Adrenal gland (tissue), 19 donors: ENCODE measurements at regions of chr9 and their contacts with region 1.

Region 1: DNA sequence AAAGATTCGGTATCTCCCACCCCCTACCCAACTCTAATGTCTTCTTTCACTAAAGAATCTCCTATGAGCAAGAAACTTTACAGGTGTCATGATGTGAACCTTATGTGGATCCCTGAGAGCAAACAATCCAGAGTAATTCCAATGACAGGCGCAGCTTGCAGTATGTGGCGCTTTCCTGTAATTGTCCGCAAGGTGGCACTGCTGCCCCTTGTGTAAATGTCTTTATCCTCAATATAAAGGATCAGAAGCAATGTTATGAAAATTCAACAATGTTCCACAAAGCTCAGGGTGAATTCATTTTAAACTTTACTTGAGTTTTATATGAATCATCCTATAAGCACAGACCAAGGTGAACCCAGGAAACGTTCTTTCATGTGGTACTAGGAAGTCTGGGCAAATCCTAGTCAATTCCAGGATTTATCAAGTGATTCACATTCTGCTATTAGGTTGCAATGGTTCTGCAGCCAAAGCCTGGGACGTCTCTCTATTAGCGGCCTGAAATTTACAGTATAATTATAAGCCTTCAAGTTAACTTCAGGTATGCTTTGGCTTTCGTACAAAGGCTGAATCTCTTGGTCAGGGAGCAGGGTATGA is 113.7 kb downstream of the TRPM6 start:
- DNase-seq: peak; percentile 59 to 94 (median 87)
- H3K4me3 ChIP-seq: no peak overlapping the region
- H3K27ac ChIP-seq: no peak overlapping the region
- H3K4me1 ChIP-seq: no peaks in the 10 kb centered on the region
- H3K27me3 ChIP-seq: peaks cover 5% of the 10 kb centered on the region
- CTCF ChIP-seq: peak; percentile 78 to 91 (median 83)
- POLR2A ChIP-seq: no peak

Region 2: GRCh38 chr9:74985041-74985440 is 211.1 kb after region 1 on chr9:
- intact Hi-C with region 1: loop called in 1 of 2 experiments (anchors 5 kb)
- DNase-seq: peak in 1 of 7 donors; percentile 13
- H3K4me3 ChIP-seq: no peak overlapping the region
- H3K27ac ChIP-seq: no peak overlapping the region
- H3K4me1 ChIP-seq: no peaks in the 10 kb centered on the region
- H3K27me3 ChIP-seq: no peaks in the 10 kb centered on the region
- CTCF ChIP-seq: no peak
- POLR2A ChIP-seq: no peak

Region 3: DNA sequence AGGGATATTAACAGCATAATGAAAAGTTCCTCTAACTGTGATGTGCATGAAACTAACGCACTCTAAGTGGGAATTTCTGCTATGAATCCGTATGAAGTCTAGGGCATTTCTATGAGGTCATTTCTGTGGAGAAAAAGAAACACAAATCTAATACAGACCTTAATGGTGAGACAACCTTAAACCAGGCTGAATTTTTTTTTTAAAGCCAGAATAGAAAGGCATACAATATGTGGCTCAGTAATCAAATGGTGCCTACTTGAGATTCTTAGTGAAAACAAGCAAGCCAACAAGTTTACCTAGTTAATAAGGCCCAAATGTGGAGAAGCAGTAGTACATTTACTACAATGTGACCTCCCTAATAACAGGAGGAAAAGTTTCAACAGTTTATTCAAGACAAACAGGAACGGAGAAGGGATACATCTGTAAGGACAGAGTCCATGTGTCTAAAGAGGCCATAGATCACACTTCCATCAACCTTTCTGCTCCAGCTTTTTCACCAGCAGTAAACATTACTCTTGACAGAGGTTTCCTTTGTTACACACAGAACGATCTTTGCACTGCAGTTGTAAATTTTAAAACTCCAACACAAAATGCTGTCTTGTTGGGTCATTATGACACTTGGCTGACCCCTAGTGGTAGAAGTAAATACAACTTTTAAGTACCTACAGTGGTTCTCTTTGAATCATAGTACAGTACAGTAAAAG is 227.9 kb after region 1 on chr9:
- intact Hi-C with region 1: loop called (anchors 2 to 5 kb)
- DNase-seq: peak in 2 of 7 donors; percentile 7 to 11
- H3K4me3 ChIP-seq: no peak overlapping the region
- H3K27ac ChIP-seq: no peak overlapping the region
- H3K4me1 ChIP-seq: no peaks in the 10 kb centered on the region
- H3K27me3 ChIP-seq: no peaks in the 10 kb centered on the region
- CTCF ChIP-seq: peak; percentile 75 to 85 (median 82)
- POLR2A ChIP-seq: peak in 1 of 2 donors; percentile 11

Region 4: DNA sequence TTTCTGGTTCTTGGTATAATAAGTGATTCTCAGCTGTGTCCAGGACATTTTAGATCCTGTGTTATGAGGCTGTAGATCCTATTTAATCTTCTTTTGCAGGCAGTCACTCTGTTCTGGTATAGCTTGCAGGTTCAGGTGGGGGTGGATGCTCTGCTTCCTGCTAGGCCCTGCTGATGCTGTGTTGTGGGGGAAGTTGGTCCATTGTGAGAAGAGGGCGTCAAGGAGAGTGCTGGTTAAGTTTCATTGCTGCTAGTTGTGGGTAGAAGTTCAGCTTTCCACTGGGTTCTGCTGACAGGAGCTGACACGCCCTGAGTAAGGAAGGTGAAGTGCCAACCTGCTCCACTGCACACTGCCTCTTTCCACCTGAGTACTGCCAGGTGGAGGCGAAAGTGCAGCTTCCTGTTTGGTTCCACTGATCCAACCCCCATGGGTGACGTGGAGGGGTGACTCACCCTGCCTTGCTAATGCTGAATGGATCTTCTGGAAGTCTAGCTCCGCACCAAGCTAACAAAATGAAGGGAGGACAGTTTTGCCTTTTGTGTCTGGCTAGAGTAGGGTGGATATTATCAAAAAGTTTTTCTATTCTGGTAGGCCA is 297.6 kb after region 1 on chr9:
- intact Hi-C with region 1: loop called in 1 of 2 experiments (anchors 5 kb)
- DNase-seq: no peak
- H3K4me3 ChIP-seq: no peak overlapping the region
- H3K27ac ChIP-seq: no peak overlapping the region
- H3K4me1 ChIP-seq: peaks cover 0 to 5% of the 10 kb centered on the region in 2 donors
- H3K27me3 ChIP-seq: no peaks in the 10 kb centered on the region
- CTCF ChIP-seq: no peak
- POLR2A ChIP-seq: no peak

Region 5: DNA sequence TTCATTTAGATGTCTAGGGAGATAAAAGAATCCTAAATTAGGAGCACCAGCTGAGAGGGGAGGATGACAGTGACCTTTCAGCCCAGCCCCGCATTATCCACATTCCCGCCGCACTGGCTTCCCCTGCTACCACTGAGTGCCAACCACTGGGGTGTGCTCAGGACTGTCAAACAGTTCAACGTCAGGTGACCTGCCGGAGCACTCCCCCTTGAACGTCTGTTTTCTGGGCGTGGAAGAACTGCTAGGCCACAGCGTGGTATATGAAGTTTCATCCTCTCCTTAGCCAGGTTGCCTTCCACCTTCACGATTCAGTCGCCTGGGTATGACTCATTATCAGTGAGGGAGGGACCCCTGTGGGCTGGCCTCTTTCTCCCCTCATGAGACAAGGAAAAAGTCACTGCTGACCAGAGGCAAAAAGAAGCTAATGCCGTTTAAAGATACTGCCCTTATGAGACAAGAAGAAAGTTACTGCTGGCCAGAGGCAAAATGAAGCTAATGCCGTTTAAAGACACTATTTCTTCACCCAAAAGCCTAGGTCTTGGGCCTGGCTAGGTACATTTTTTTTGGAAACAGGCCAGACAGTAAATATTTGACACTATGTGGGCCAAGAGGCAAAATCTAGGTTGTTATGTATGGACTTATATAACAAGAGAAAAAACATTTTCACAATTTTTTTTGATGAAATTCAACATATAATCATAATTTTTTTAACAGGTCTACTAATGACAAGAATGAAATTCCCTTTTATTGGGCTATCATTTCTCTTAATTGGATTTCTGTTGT is 309.4 kb after region 1 on chr9:
- intact Hi-C with region 1: loop called (anchors 2 to 5 kb)
- DNase-seq: no peak
- H3K4me3 ChIP-seq: no peak overlapping the region
- H3K27ac ChIP-seq: no peak overlapping the region
- H3K4me1 ChIP-seq: peaks cover 0 to 26% of the 10 kb centered on the region in 2 donors
- H3K27me3 ChIP-seq: no peaks in the 10 kb centered on the region
- CTCF ChIP-seq: no peak
- POLR2A ChIP-seq: no peak